Tibial artery (tissue), 4 donors: ENCODE measurements at regions of chr13 and their contacts with region 1.

Region 1: GRCh38 chr13:31199849-31200636 is at the start of gene B3GLCT:
- DNase-seq: peak; percentile 60 to 85
- H3K4me3 ChIP-seq: peak within 1 kb of the TSS; percentile 68 to 82
- H3K27ac ChIP-seq: peak within 1 kb of the TSS; percentile 89 to 96
- H3K4me1 ChIP-seq: peaks cover 0 to 39% (median 16%) of the 10 kb centered on the region in 4 donors
- H3K27me3 ChIP-seq: no peaks in the 10 kb centered on the region
- CTCF ChIP-seq: peak; percentile 83 to 94

Region 2: GRCh38 chr13:31161828-31162590 is 38.0 kb before region 1 on chr13 and contains the start of gene HSPH1:
- intact Hi-C with region 1: loop called (anchors 2 kb)
- DNase-seq: peak; percentile 98 to 99
- H3K4me3 ChIP-seq: peak within 1 kb of the TSS; percentile 71 to 84
- H3K27ac ChIP-seq: peak within 1 kb of the TSS; percentile 81 to 82
- H3K4me1 ChIP-seq: peaks cover 0 to 26% (median 14%) of the 10 kb centered on the region in 4 donors
- H3K27me3 ChIP-seq: no peaks in the 10 kb centered on the region
- CTCF ChIP-seq: peak; percentile 8 to 13

Region 3: DNA sequence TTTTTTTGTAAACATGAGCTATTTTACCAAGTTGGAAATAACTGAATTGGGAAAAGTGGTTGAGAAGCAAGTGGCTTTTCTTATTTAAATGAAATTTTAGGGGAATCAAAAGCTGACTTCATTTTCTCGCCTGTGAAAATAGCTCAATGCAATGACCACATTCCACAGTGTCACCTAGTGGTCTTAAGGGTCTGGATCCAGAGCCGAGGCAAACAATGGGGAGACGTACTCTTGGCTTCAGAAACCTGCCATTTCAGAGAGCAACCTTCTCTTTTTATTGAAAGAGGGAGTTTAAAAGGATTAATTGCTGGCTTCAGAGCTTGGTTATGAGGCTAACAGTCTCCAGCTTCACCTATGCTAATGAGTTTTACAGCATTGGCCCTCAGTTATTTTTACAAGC is 499.6 kb after region 1 on chr13:
- intact Hi-C with region 1: no loop called
- DNase-seq: no peak
- H3K4me3 ChIP-seq: no peak overlapping the region
- H3K27ac ChIP-seq: no peak overlapping the region
- H3K4me1 ChIP-seq: no peaks in the 10 kb centered on the region
- H3K27me3 ChIP-seq: no peaks in the 10 kb centered on the region
- CTCF ChIP-seq: no peak

Region 4: GRCh38 chr13:31742097-31742734 is 542.2 kb after region 1 on chr13:
- intact Hi-C with region 1: loop called (anchors 10 kb)
- DNase-seq: peak; percentile 66 to 75
- H3K4me3 ChIP-seq: no peak overlapping the region
- H3K27ac ChIP-seq: no peak overlapping the region
- H3K4me1 ChIP-seq: peaks cover 0 to 12% (median 0%) of the 10 kb centered on the region in 4 donors
- H3K27me3 ChIP-seq: no peaks in the 10 kb centered on the region
- CTCF ChIP-seq: peak; percentile 91 to 99